Right ventricle myocardium inferior (tissue), 1 donor: ENCODE measurements at regions of chr3 and their contacts with region 1.

Region 1: GRCh38 chr3:46629551-46630517 is 17.5 kb downstream of the FAM240A start:
- DNase-seq: peak; percentile 88
- ATAC-seq: peak; percentile 89

Region 2: DNA sequence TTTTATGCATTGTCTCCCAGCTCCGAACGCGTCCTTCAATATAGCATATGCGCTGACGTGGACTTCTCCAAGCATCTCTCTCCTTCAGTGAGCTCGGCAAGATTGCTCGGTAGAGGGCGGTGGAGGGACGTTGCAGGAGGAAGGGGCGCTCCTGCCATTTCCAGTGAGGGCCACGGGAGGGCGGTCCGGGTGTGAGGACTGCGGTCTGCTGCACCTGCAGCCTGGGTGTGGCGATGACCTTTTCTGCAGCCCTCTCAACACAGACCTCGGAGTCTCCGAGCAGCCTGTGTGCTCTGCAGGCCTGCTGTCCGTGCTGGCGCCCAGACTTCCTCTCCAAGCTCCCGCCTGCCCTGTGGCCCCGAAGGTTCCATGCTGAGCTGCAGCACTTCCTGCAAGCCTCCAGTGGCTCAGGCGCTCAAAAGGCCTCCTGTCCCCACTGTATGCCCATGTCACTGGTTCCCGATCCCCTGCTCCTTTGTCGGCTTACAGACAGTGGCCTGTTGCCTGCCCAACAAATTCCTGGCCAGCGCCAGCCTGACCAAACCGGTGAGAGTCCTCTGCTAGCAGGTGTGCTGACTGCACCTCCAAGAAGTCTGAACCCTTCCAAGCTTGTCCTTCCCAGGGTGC is 141.0 kb before region 1 on chr3:
- intact Hi-C with region 1: loop called (anchors 2 kb)
- DNase-seq: peak; percentile 94
- ATAC-seq: peak; percentile 91

Region 3: GRCh38 chr3:46615976-46616375 is 13.9 kb before region 1 on chr3:
- intact Hi-C with region 1: loop called (anchors 1 kb)
- DNase-seq: no peak
- ATAC-seq: no peak